H1 (cell line): ENCODE measurements at regions of chr1 and their contacts with region 1.

Region 1: DNA sequence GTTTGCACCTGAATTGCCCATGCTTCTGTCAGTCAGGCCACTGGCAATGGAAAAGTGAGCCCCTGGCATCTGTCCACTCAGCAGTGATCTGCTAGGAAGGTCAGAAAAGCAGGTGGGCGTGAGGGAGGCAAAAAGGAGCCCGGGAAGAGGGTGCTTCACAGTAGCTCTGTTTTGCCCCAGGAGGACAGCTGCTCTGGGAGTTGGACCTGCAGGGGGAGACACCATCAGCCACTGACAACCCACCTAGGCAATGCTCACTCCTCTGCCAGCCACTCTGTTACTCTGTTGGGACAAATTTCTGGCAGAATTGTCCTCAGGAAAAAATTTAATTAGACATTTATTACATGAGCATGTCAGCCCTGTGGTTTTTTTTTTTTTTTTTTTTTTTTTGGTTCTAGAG is 146.4 kb downstream of the LRIG2 start:
- DNase-seq: no peak
- H3K4me3 ChIP-seq: no peak overlapping the region
- H3K27ac ChIP-seq: no peak overlapping the region
- H3K4me1 ChIP-seq: peaks cover 0 to 7% (median 0%) of the 10 kb centered on the region in 4 experiments; a peak in 2 of 7 replicates
- H3K27me3 ChIP-seq: no peaks in the 10 kb centered on the region
- CTCF ChIP-seq: peak; percentile 65 to 84 (median 66)
- EP300 ChIP-seq: no peak
- POLR2A ChIP-seq: no peak
- RAD21 ChIP-seq: peak; percentile 57 to 73

Region 2: DNA sequence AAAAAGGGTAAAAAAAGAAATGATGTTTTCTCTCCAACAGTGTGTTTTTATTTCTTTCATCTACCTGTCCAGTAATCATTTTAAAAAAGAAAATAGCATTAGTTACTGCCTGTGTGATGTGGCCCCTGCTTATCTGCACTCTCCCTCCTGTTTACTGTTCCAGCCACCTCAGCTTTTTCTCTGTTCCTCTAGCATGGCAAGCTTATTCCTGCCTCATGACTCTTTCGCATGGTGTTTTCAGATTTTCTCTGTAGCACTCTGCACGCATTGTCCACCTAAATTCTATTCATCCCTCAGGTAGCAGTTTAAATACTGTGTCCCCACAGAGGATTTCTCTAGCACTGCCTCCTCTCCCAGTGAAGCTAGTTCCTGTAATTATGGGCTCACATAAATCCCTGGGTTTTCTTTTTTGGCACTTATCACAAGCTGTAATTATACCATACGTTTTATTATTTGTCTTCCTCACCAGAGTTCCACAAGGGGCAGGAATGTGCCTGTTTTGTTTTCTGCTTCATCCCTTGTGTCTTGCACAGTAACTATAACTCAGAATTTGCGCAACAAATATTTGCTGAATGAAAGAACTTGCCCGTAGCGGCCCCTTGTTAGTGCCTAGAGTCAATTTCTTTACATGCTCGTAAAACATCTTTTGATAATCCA is 197.8 kb before region 1 on chr1:
- CTCF ChIA-PET with region 1: no interaction called
- POLR2A ChIA-PET with region 1: no interaction called
- DNase-seq: no peak
- H3K4me3 ChIP-seq: no peak overlapping the region
- H3K27ac ChIP-seq: no peak overlapping the region
- H3K4me1 ChIP-seq: peaks cover 0 to 11% (median 2%) of the 10 kb centered on the region in 4 experiments; a peak in 4 of 7 replicates
- H3K27me3 ChIP-seq: no peaks in the 10 kb centered on the region
- CTCF ChIP-seq: no peak
- EP300 ChIP-seq: no peak
- POLR2A ChIP-seq: no peak
- RAD21 ChIP-seq: no peak

Region 3: GRCh38 chr1:113072757-113073478 is 146.5 kb before region 1 on chr1 and contains the start of gene LRIG2:
- CTCF ChIA-PET with region 1: no interaction called
- POLR2A ChIA-PET with region 1: no interaction called
- DNase-seq: peak; percentile 98
- H3K4me3 ChIP-seq: peak within 1 kb of the TSS; percentile 52 to 97 (median 88)
- H3K27ac ChIP-seq: peak within 1 kb of the TSS; percentile 92
- H3K4me1 ChIP-seq: peaks cover 0 to 5% (median 2%) of the 10 kb centered on the region in 4 experiments; a peak in 4 of 7 replicates
- H3K27me3 ChIP-seq: no peaks in the 10 kb centered on the region
- CTCF ChIP-seq: peak; percentile 72 to 83 (median 76)
- EP300 ChIP-seq: no peak
- POLR2A ChIP-seq: peak; percentile 85 to 86
- RAD21 ChIP-seq: peak; percentile 75 to 80
- total RNA-seq, gene LRIG2: 20.4 and 20.9 TPM in 2 replicates

Region 4: GRCh38 chr1:113207019-113207418 is 12.4 kb before region 1 on chr1:
- CTCF ChIA-PET with region 1: interaction called, 25 read pairs
- POLR2A ChIA-PET with region 1: interaction called, 4 read pairs
- DNase-seq: no peak
- H3K4me3 ChIP-seq: no peak overlapping the region
- H3K27ac ChIP-seq: no peak overlapping the region
- H3K4me1 ChIP-seq: peaks cover 0 to 5% (median 0%) of the 10 kb centered on the region in 4 experiments; a peak in 1 of 7 replicates
- H3K27me3 ChIP-seq: no peaks in the 10 kb centered on the region
- CTCF ChIP-seq: no peak
- EP300 ChIP-seq: no peak
- POLR2A ChIP-seq: no peak
- RAD21 ChIP-seq: no peak